ENCODE measurements at regions of chr1 and their contacts with region 1.

Region 1: DNA sequence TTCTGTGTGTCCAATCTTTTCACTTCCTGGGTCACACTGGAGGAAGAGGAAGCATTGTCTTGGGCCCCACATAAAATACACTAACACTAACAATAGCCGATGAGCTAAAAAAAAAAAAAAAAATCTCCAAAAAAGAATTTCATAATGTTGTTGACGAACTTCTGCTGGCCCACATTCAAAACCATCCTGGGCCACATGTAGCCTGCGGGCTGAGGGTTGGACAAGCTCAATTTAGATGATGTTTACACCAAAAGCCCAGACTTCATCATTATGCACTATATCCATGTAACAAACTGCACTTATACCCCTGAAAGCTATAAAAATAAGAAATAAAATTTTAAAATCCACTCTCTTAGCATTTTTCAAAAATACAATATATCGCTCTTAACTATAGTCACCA is 187.8 kb upstream of the PTBP2 start:
- DNase-seq: no peak

Region 2: DNA sequence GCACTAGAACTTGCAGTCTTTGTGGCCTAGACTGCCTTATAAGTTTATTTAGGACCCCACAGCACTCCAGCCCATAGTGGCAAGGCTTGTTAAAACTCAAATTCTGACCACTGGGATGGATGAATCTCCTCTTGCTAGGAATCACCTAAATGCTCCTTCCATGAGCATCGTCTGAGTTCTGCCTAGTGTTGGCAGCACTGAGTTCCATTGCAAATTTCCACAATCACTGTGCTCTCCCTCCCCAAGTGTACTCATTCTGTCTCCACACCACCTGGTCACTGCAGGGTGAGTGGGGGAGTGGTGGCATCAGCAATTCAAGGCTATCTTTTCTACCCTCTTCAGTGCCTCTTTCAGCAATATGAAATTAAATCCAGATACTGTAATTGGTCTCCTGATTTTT is 141.1 kb after region 1 on chr1:
- intact Hi-C with region 1: no loop called
- DNase-seq: no peak

Region 3: GRCh38 chr1:96771847-96772246 is 238.0 kb after region 1 on chr1:
- intact Hi-C with region 1: loop called in 1 of 2 experiments (anchors 5 kb)
- DNase-seq: no peak

Region 4: GRCh38 chr1:96927125-96927524 is 393.3 kb after region 1 on chr1:
- intact Hi-C with region 1: no loop called
- DNase-seq: no peak

Measured in posterior vena cava (tissue), 2 donors.